ENCODE measurements at regions of chr15 and their contacts with region 1.

Region 1: DNA sequence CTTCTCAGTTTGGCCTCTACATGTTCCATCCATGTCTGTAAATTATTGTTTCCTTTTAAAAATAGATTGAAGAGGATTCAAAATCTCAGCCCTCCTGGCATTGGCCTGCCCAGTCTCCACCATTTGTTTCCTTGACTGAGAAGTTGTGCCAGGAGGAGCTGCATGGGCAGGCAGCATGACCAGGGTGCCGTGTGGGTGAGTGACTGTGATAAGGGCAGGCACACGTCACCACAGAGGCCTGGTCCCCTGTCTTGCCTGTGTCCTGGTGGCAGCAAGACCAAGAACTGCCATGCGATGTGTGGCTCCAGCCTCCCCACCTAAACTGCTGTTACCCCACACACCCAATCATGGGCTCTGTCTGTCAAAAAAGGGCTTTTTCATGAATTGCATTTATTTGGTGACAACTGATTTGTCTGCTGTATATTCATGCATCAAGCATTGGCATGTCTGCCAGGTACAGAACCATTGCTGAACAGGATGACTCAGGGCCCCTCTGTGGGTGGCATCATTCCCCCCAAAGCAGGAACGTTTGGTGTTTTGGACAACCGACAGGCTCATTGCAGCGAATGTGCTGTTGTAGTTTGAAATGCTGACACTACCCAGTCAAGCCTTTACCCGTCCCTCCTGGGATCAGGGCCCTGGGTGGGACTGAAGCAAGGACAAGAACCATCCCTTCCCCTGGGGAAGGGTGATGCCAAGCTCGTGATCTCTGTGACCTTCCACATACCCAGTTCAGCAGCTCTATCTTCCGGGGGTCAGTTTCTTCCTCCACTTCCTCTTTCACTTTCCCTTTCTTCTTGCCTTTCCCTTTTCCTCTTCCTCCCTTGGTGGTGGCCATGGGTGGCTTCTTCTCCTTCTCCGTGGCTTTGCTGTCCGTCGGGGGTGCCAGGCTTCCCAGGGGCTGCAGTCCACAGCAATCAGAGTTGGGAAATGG is 51.6 kb downstream of the TRPM1 start:
- DNase-seq: no peak
- ATAC-seq: no peak
- H3K4me3 Mint-ChIP-seq: no peak overlapping the region
- H3K27ac Mint-ChIP-seq: no peak overlapping the region
- H3K4me1 Mint-ChIP-seq: no peaks in the 10 kb centered on the region
- H3K27me3 Mint-ChIP-seq: peaks cover 3% of the 10 kb centered on the region

Region 2: GRCh38 chr15:31098953-31099740 is 49.2 kb after region 1 on chr15:
- CTCF ChIA-PET with region 1: no interaction called
- POLR2A ChIA-PET with region 1: no interaction called
- intact Hi-C with region 1: loop called in 1 of 2 experiments (anchors 10 kb)
- DNase-seq: no peak
- ATAC-seq: no peak
- H3K4me3 Mint-ChIP-seq: no peak overlapping the region
- H3K27ac Mint-ChIP-seq: no peak overlapping the region
- H3K4me1 Mint-ChIP-seq: peaks cover 2% of the 10 kb centered on the region
- H3K27me3 Mint-ChIP-seq: no peaks in the 10 kb centered on the region

Measured in activated CD4-positive, alpha-beta T cell treated with anti-CD3 and anti-CD28 coated beads for 36 hours (primary cell).